ENCODE measurements at regions of chr14 and their contacts with region 1.

Region 1: GRCh38 chr14:93332853-93333630 is at the start of gene BTBD7:
- DNase-seq: peak; percentile 88 to 91
- ATAC-seq: peak; percentile 94 to 95
- H3K4me3 ChIP-seq: peak within 1 kb of the TSS; percentile 62 to 77 (median 70)
- H3K27ac ChIP-seq: peak within 1 kb of the TSS; percentile 91 to 97 (median 93)
- H3K4me1 ChIP-seq: peaks cover 31 to 36% of the 10 kb centered on the region in 2 donors
- H3K27me3 ChIP-seq: no peaks in the 10 kb centered on the region
- CTCF ChIP-seq: peak in 2 of 5 experiments; percentile 24 to 25
- POLR2A ChIP-seq: peak; percentile 74 to 77
- total RNA-seq, gene BTBD7: 10.0 to 16.9 (median 12.1) TPM

Region 2: DNA sequence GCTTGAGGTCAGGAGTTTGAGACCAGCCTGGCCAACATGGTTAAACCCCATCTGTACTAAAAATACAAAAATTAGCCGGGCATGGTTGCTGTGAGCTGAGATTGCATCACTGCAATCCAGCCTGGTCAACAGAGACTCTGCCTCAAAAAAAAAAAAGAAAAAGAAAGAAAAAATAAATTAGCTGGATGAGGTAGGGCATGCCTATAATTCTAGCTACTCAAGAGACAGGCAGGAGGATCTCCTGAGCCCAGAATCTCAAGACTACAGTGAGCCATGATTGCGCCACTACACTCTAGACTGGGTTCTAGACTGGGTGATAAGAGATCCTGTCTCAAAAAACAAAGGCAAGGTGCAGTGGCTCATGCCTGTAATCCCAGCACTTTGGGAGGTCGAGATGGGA is 1839.9 kb before region 1 on chr14:
- in situ Hi-C with region 1: no loop called
- intact Hi-C with region 1: loop called (anchors 10 kb)
- DNase-seq: no peak
- ATAC-seq: no peak
- H3K4me3 ChIP-seq: no peak overlapping the region
- H3K27ac ChIP-seq: peak overlapping the region in 2 of 4 donors; percentile 12 to 24
- H3K4me1 ChIP-seq: peaks cover 52 to 54% of the 10 kb centered on the region in 2 donors
- H3K27me3 ChIP-seq: no peaks in the 10 kb centered on the region
- CTCF ChIP-seq: no peak
- POLR2A ChIP-seq: no peak

Region 3: DNA sequence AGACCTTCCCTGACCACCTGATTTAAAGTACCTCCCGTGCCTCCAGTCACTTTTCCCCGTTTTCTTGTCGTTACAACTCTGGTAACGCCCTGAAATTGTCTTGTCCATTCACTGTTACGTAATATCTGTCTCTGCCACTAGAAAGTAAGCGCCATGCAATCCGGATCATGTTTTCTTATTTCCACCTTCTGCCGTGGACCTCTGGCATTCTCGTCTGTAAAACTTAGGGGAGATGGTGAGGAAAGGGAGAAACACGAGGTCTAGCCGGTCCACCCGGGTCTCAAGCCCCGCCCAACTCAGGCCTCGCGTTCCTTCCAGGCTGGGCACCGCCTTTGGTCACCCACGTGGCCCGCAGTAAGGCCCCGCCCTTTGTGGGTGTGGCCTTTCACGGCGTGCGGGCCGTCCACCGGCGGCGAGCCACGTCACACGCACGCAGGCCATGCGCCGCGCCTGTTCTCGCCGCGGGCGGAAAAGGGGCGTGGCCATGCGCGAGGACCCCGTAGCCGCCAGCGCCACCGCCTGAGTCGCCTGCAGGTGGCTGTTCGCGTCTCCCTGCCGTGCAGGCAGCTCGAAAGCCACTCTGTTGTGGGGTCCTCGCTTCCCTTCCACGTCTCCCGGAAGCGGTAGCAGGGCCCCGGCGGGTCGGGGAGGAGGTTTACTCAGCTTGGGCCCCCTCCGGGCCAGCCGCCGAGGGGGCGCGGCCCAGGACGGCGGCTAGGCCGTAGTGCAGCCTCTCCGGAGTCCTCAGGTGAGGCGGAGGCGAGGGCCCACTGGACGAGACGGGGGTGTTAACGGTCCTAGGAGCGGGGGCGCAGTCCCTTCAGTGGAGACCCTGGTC is 539.1 kb before region 1 on chr14 and contains the start of gene GOLGA5:
- in situ Hi-C with region 1: no loop called
- intact Hi-C with region 1: loop called (anchors 5 kb)
- DNase-seq: peak; percentile 95 to 97
- ATAC-seq: peak; percentile 94 to 95
- H3K4me3 ChIP-seq: peak within 1 kb of the TSS; percentile 76 to 95 (median 92)
- H3K27ac ChIP-seq: peak within 1 kb of the TSS; percentile 87 to 92 (median 90)
- H3K4me1 ChIP-seq: peaks cover 15 to 26% of the 10 kb centered on the region in 2 donors
- H3K27me3 ChIP-seq: no peaks in the 10 kb centered on the region
- CTCF ChIP-seq: peak in 4 of 5 experiments; percentile 23 to 33 (median 30)
- POLR2A ChIP-seq: peak; percentile 73 to 83
- total RNA-seq, gene GOLGA5: 27.0 to 34.8 (median 33.8) TPM

Region 4: DNA sequence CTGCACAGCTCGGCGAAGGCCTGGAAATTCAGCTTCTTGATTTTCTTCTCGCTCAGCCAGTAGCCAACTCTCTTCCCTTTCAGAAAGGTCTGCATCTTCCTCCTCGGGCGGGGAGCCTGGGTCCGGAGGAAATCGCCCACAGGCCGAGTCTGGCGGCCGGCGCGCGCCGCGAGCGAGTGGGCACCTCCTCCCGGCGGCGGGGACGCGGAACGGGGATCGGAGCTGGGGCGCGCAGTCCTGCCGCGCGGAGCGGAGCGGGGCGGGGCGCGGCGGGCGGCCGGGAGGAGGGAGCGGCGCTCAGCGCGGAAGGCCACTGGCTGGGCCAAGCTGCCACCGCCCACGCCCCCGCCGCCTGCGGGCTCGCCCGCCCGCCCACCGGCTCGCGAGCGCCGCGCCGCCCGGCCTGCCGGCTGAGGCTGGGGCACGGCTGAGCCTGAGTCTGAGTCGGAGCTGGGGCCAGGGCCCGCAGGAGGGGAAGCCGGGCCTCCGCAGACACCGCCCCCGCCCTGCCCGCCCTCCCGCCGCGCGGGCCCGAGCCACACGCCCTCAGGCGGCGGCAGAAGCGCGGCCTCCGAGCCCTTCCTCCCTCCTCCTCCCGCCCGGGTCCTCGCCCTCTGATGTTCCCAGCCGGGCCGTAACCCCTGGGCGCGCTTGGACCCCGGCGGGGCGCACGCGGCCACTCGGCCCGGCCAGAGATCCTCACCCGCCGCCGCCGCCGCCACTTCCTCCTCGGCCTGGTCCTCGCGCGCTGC is 217.8 kb before region 1 on chr14:
- in situ Hi-C with region 1: no loop called
- intact Hi-C with region 1: loop called (anchors 2 kb)
- DNase-seq: peak; percentile 71 to 78
- ATAC-seq: peak; percentile 77 to 80
- H3K4me3 ChIP-seq: peak overlapping the region; percentile 83 to 94 (median 92)
- H3K27ac ChIP-seq: peak overlapping the region; percentile 95 to 96 (median 96)
- H3K4me1 ChIP-seq: peaks cover 24 to 29% of the 10 kb centered on the region in 2 donors
- H3K27me3 ChIP-seq: no peaks in the 10 kb centered on the region
- CTCF ChIP-seq: peak in 2 of 5 experiments; percentile 3 to 7
- POLR2A ChIP-seq: peak; percentile 58 to 69

Region 5: DNA sequence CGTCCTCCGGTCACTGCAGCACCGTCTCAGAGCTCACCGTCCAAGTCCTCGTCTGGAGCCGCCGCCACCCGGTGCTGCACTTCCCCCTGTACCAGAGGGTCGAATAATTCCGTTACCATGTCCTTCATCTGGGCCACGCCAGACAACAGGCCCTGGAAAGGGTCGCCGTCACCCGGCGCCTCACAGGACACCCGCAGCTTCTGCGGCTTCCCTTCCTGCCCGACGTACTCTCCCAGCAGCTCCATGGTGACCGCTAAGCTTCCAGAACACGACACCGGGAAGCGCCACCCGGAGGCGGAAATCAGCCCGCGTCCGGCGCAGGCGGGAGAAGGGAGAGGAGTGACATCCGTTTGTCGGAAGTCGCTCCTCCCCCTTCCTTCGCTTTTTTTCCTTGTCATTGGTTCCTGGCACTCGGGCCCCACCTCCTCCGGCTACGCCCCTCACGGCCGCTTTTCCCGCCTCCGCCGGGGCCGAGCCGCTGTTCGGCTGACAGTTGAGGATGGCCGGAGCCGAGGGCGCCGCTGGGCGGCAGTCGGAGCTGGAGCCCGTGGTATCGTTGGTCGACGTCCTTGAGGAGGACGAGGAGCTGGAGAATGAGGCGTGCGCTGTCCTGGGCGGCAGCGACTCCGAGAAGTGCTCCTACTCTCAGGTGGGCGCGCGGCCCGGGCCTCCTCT is 126.1 kb before region 1 on chr14 and contains the starts of genes GON7 and UBR7:
- in situ Hi-C with region 1: no loop called
- intact Hi-C with region 1: loop called (anchors 1 kb)
- DNase-seq: peak; percentile 94 to 95
- ATAC-seq: peak; percentile 98 to 100
- H3K4me3 ChIP-seq: peak within 1 kb of the TSS; percentile 82 to 89 (median 87)
- H3K27ac ChIP-seq: peak within 1 kb of the TSS; percentile 85 to 96 (median 88)
- H3K4me1 ChIP-seq: peaks cover 21 to 24% of the 10 kb centered on the region in 2 donors
- H3K27me3 ChIP-seq: no peaks in the 10 kb centered on the region
- CTCF ChIP-seq: peak in 3 of 5 experiments; percentile 19 to 54 (median 48)
- POLR2A ChIP-seq: peak; percentile 71 to 81
- total RNA-seq, gene GON7: 8.3 to 17.9 (median 11.1) TPM
- total RNA-seq, gene UBR7: 14.8 to 36.4 (median 27.4) TPM

Measured in gastrocnemius medialis (tissue), 4 donors.